Naive thymus-derived CD4-positive, alpha-beta T cell (primary cell): ENCODE measurements at regions of chr7 and their contacts with region 1.

Region 1: DNA sequence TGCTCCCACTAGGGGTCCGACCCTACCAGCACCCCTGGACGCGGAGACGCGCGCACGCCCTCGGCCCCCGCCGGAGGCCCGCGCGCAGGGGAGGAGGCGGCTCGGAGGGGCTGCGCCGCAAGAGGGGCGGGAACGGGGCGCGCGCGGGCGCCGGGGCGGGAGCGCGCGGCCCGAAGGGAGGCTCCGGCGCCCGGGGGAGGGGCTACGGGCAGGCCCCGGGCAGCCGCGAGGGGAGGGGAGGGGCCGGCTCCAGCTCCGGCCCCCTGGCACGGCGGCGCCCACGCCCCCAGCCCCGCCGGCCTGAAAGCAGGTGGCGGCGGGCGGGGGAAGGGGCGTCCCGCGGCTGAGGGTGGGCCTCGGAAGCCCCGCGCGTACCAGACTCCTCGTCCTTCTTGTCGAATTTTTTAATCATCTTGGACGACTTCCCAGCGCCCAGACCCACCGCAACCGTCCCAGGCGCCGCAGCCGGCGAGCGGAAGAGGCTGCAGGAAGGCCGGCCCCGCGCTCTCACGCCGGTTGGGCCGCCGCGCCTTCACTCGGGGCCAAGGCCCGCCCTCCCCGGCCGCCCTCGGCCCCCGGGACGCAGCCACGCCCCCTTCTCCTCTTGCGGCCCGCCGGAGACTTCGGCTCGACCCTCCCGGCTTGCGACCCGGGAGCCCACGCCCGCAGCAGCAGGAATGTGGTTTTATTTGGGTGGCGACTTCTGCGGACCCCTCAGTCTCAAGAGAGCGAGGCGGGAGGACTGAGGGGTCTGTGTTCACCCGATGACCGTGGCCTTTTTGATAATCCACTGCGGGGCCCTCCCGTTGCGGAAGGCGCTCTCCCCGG is at the start of gene COPG2:
- DNase-seq: peak; percentile 26 to 90 (median 46)
- ATAC-seq: peak; percentile 93
- H3K4me3 ChIP-seq: peak within 1 kb of the TSS; percentile 64
- H3K4me3 Mint-ChIP-seq: peak within 1 kb of the TSS; percentile 85 to 95 (median 90)
- H3K27ac ChIP-seq: peak within 1 kb of the TSS; percentile 73
- H3K27ac Mint-ChIP-seq: peak within 1 kb of the TSS; percentile 38 to 93 (median 81)
- H3K4me1 ChIP-seq: no peaks in the 10 kb centered on the region
- H3K4me1 Mint-ChIP-seq: peaks cover 6 to 23% (median 21%) of the 10 kb centered on the region in 7 donors
- H3K27me3 ChIP-seq: no peaks in the 10 kb centered on the region
- H3K27me3 Mint-ChIP-seq: peaks cover 0 to 11% (median 0%) of the 10 kb centered on the region in 5 donors
- total RNA-seq, gene COPG2: 8.1 to 12.4 (median 9.4) TPM

Region 2: GRCh38 chr7:129611246-129612111 is 1057.0 kb before region 1 on chr7 and contains the start of gene NRF1:
- CTCF ChIA-PET with region 1: no interaction called
- POLR2A ChIA-PET with region 1: no interaction called
- intact Hi-C with region 1: loop called in 1 of 2 experiments (anchors 2 kb)
- DNase-seq: peak; percentile 89 to 97 (median 94)
- ATAC-seq: peak; percentile 92
- H3K4me3 ChIP-seq: peak within 1 kb of the TSS; percentile 87
- H3K4me3 Mint-ChIP-seq: peak within 1 kb of the TSS; percentile 88 to 99 (median 96)
- H3K27ac ChIP-seq: peak within 1 kb of the TSS; percentile 82
- H3K27ac Mint-ChIP-seq: peak within 1 kb of the TSS; percentile 92 to 99 (median 96)
- H3K4me1 ChIP-seq: peaks cover 24 to 38% of the 10 kb centered on the region in 2 donors
- H3K4me1 Mint-ChIP-seq: peaks cover 37 to 79% (median 67%) of the 10 kb centered on the region in 7 donors
- H3K27me3 ChIP-seq: no peaks in the 10 kb centered on the region
- H3K27me3 Mint-ChIP-seq: no peaks in the 10 kb centered on the region
- total RNA-seq, gene NRF1: 25.8 to 49.3 (median 35.3) TPM

Region 3: DNA sequence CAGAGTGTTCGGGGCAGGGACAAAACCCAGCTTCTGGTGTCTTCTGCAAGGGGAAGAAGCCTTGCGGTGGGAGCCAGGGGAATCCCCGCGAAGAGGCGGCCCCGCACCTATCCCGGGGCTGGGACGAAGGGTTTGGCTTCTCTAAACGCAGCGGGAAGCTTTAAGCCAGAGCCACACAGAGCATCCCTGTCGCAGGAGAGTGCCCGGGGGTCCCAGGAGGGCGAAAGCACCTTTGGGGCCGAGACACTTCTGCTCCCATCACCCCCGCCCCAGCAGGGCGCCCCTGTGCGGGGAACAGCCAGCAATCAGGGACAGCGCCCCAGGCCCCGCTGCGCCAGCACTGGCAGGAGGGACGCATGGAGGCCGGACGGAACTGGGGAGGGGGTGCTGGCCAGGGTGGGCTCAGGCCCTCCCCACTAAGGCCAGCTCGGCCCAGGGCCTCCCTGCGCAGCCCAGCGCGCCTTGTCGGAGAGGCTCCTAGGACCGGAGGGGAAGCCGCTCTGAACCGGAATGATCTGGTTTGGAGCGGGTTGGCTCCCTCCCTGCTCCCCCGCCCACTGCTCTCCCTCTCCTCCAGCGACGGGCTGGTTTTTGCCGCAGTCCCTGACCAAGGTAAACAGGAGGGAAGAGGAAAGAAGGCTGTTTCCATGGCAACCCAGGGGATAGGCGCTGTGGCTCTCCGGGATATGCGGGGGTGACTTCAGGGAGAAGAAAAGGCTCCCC is 527.1 kb before region 1 on chr7:
- CTCF ChIA-PET with region 1: no interaction called
- POLR2A ChIA-PET with region 1: no interaction called
- intact Hi-C with region 1: loop called in 1 of 2 experiments (anchors 2 kb)
- DNase-seq: peak in 8 of 9 donors; percentile 28 to 67 (median 56)
- ATAC-seq: peak; percentile 64
- H3K4me3 ChIP-seq: peak overlapping the region; percentile 79
- H3K4me3 Mint-ChIP-seq: peak overlapping the region; percentile 71 to 90 (median 85)
- H3K27ac ChIP-seq: peak overlapping the region; percentile 87
- H3K27ac Mint-ChIP-seq: peak overlapping the region; percentile 46 to 87 (median 83)
- H3K4me1 ChIP-seq: peaks cover 0 to 13% of the 10 kb centered on the region in 2 donors
- H3K4me1 Mint-ChIP-seq: peaks cover 6 to 35% (median 13%) of the 10 kb centered on the region in 7 donors
- H3K27me3 ChIP-seq: no peaks in the 10 kb centered on the region
- H3K27me3 Mint-ChIP-seq: peaks cover 0 to 17% (median 0%) of the 10 kb centered on the region in 5 donors

Region 4: GRCh38 chr7:130440527-130441365 is 227.7 kb before region 1 on chr7 and contains the start of gene CEP41:
- CTCF ChIA-PET with region 1: no interaction called
- POLR2A ChIA-PET with region 1: no interaction called
- intact Hi-C with region 1: loop called (anchors 2 to 5 kb)
- DNase-seq: peak; percentile 85 to 90 (median 89)
- ATAC-seq: peak; percentile 98
- H3K4me3 ChIP-seq: peak within 1 kb of the TSS; percentile 87
- H3K4me3 Mint-ChIP-seq: peak within 1 kb of the TSS; percentile 95 to 100 (median 98)
- H3K27ac ChIP-seq: peak within 1 kb of the TSS; percentile 76
- H3K27ac Mint-ChIP-seq: peak within 1 kb of the TSS; percentile 95 to 99 (median 96)
- H3K4me1 ChIP-seq: peaks cover 4 to 26% of the 10 kb centered on the region in 2 donors
- H3K4me1 Mint-ChIP-seq: peaks cover 26 to 71% (median 59%) of the 10 kb centered on the region in 7 donors
- H3K27me3 ChIP-seq: no peaks in the 10 kb centered on the region
- H3K27me3 Mint-ChIP-seq: peaks cover 0 to 4% (median 0%) of the 10 kb centered on the region in 5 donors
- total RNA-seq, gene CEP41: 6.9 to 16.0 (median 12.6) TPM

Region 5: DNA sequence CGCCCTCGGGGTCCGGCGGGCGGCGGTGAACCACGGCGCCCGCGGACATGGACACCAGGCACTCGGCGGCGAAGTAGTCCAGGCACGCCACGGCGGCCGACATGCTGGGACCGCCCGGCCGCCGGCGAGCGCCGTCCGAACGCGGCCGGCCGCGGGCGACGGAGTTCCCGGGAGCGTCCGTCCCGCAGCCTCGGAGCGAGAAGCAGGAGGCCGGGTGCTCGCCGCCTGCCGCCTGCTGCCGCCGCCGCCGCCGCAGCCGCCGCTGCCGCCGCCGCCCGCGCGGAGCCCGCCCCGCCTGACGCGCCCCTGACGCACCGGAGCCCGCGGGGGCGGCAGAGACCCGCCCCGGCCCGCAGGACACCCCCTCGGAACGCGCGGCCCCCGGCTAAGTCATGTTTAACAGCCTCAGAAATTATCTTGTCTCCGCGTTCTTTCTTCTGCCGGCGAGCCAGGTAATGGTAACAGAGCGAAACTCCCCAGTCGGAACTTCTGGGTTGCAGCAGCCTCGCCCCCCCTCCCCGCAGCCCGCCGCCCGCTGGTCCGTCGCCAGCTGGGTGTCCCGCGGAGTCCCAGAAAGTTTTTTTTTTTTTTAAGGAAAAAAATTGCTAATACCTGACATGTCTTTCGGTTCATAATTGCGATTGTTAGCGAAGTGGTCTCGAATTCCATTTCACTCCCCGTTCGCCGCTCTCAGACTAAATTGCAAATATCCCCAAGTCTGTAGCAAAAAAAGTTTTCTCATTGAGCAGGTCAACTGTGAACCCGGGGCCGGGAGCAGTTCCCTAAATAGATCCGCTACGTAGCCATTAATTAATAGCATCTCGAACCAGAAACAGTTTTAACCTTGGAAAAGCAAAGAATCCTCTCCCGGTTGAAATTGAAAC is 65.7 kb after region 1 on chr7 and contains the start of gene KLF14:
- CTCF ChIA-PET with region 1: no interaction called
- POLR2A ChIA-PET with region 1: no interaction called
- intact Hi-C with region 1: loop called in 1 of 2 experiments (anchors 5 kb)
- DNase-seq: peak; percentile 22 to 65 (median 32)
- ATAC-seq: peak; percentile 77
- H3K4me3 ChIP-seq: peak within 1 kb of the TSS; percentile 38
- H3K4me3 Mint-ChIP-seq: peak within 1 kb of the TSS; percentile 83 to 91 (median 86)
- H3K27ac ChIP-seq: no peak within 1 kb of the TSS
- H3K27ac Mint-ChIP-seq: peak within 1 kb of the TSS in 3 of 9 donors; percentile 25 to 78 (median 47)
- H3K4me1 ChIP-seq: peaks cover 0 to 4% of the 10 kb centered on the region in 2 donors
- H3K4me1 Mint-ChIP-seq: peaks cover 0 to 9% (median 8%) of the 10 kb centered on the region in 7 donors
- H3K27me3 ChIP-seq: peaks cover 26 to 56% of the 10 kb centered on the region in 2 donors
- H3K27me3 Mint-ChIP-seq: peaks cover 73 to 85% (median 77%) of the 10 kb centered on the region in 5 donors
- total RNA-seq, gene KLF14: 0.37 TPM in 1 of 5 experiments, not detected in the others

Region 6: GRCh38 chr7:131849472-131849871 is 1181.0 kb after region 1 on chr7:
- CTCF ChIA-PET with region 1: no interaction called
- POLR2A ChIA-PET with region 1: no interaction called
- intact Hi-C with region 1: no loop called
- DNase-seq: no peak
- ATAC-seq: no peak
- H3K4me3 ChIP-seq: no peak overlapping the region
- H3K4me3 Mint-ChIP-seq: no peak overlapping the region
- H3K27ac ChIP-seq: no peak overlapping the region
- H3K27ac Mint-ChIP-seq: no peak overlapping the region
- H3K4me1 ChIP-seq: no peaks in the 10 kb centered on the region
- H3K4me1 Mint-ChIP-seq: no peaks in the 10 kb centered on the region
- H3K27me3 ChIP-seq: no peaks in the 10 kb centered on the region
- H3K27me3 Mint-ChIP-seq: peaks cover 0 to 33% (median 21%) of the 10 kb centered on the region in 5 donors